Activated T-helper 2 cell treated with anti-CD3 and anti-CD28 coated beads, Interferon-gamma antibody, Interleukin-2, Interleukin-4, amounts not matched to agents 10 μg/mL and 5 μg/mL and 100 μg/mL, durations not matched to agents 14 hours and 24 hours and 36 hours (primary cell): ENCODE measurements at regions of chr1 and their contacts with region 1.

Region 1: DNA sequence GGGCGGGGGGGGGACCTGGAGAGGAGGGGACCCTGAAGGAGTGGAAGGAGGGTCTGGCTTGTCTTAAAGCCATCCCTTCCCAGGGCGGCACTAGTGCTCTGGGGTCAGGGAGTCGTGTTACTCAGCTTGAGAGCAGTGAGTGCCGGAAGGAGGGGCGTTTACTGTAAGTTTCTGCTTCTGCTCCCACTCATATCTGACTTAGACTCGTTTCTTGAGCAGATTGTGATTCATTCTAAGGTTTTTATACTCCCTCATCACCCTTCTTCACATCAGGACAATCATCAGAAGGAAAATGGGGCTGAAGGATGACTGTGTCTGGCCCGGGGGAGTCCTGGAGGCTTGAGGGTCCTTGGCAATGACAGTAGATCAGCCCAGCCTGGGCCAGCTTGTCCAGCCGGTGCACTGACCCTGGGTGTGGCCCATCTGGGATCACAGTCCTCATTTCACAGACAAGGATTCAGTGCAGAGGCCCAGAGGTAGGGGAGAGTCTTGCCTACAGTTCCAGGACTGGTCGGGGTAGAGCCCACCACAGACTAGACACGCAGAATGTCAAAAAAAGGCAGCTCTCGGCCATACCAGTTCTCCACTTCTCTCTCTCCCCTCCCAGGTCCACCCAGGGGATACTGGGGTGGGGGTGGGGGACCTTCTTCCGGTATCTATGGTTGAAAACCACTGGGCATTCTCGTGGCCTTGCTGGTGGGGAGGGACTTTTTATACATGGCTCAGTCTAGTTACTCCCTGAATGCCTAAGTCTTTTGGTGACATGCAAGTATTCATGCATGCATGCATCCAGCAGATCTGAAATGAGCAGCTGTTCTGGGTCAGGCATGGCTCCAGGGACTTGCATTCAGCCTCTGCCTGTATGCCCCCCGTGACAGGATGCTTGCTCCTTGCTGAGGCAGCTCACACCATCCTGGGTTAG is 5.1 kb downstream of the TNFRSF8 start:
- DNase-seq: peak; percentile 44
- H3K4me3 Mint-ChIP-seq: peak overlapping the region; percentile 73
- H3K27ac Mint-ChIP-seq: peak overlapping the region; percentile 94
- H3K4me1 Mint-ChIP-seq: peaks cover 49% of the 10 kb centered on the region
- H3K27me3 Mint-ChIP-seq: no peaks in the 10 kb centered on the region

Region 2: DNA sequence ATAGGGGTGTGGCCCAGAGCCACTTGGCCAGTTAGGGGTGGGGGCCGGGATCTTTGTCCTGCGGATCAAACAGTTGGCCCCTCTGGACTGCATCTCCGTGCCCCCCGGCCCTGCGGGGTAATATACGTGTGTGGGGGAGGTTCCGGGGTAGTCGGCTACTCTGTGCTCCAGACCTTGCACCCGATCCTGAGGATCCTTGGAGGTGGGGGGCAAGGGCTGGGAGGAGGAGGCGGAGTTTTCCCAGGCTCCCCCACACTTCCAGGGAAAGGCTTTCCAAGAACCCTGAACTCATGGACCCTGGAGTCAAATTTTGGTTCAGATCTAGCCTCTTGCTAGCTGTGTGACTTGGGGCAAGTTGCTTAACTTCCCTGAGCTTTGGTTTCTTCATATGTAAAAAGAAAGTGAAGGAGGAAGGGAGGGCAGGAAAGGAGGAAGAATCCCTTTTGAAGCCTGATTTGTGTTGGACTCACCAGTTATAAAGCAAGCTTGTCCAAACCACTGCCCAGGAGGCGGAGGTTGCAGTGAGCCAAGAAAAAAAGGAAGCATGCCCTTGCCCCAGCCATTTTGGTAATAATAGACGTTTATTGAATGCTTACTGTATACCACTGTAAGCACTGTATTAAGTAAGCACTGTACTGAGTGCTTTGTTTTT is 48.2 kb before region 1 on chr1:
- intact Hi-C with region 1: loop called (anchors 1 kb)
- DNase-seq: no peak
- H3K4me3 Mint-ChIP-seq: peak overlapping the region; percentile 87
- H3K27ac Mint-ChIP-seq: peak overlapping the region; percentile 72
- H3K4me1 Mint-ChIP-seq: peaks cover 6% of the 10 kb centered on the region
- H3K27me3 Mint-ChIP-seq: no peaks in the 10 kb centered on the region

Region 3: DNA sequence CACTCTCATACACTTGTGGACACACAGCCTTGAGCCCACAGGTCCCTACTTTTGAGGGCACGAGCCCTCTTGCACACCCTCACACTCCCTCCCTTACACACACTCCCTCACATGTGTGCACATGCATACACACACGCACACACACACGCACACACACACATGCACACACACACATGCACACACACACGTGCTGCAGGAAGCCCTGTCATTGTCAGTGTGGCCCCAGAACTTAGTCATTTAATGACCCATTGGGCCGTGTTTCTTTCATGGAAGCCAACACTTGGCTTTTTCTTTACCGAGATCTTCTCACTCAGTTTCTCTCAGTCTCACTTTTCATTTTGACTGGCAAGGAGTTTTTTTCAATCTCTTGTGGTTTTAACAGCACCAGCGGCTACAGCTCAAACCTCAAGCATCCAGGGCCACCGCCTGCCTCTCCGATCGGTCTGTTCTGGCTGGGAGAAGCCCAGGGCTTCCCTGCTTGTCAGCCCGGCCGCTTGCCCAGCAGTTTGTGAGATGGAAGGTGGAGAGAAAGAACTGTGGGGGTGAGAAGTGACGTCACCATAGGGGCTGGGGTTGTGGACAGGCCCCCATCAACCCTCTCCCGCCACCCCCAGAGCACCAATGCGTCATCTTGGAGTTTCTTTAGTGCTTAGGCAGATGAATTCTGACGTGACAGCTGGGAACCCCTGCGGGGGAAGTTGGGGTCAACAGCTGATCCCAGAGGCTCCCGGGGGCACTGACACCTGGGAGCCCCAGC is 20.9 kb before region 1 on chr1:
- intact Hi-C with region 1: loop called (anchors 1 kb)
- DNase-seq: peak; percentile 72
- H3K4me3 Mint-ChIP-seq: no peak overlapping the region
- H3K27ac Mint-ChIP-seq: no peak overlapping the region
- H3K4me1 Mint-ChIP-seq: peaks cover 31% of the 10 kb centered on the region
- H3K27me3 Mint-ChIP-seq: no peaks in the 10 kb centered on the region

Region 4: GRCh38 chr1:12148160-12148957 is 80.2 kb after region 1 on chr1:
- intact Hi-C with region 1: no loop called
- DNase-seq: no peak
- H3K4me3 Mint-ChIP-seq: no peak overlapping the region
- H3K27ac Mint-ChIP-seq: peak overlapping the region; percentile 96
- H3K4me1 Mint-ChIP-seq: peaks cover 75% of the 10 kb centered on the region
- H3K27me3 Mint-ChIP-seq: no peaks in the 10 kb centered on the region

Region 5: DNA sequence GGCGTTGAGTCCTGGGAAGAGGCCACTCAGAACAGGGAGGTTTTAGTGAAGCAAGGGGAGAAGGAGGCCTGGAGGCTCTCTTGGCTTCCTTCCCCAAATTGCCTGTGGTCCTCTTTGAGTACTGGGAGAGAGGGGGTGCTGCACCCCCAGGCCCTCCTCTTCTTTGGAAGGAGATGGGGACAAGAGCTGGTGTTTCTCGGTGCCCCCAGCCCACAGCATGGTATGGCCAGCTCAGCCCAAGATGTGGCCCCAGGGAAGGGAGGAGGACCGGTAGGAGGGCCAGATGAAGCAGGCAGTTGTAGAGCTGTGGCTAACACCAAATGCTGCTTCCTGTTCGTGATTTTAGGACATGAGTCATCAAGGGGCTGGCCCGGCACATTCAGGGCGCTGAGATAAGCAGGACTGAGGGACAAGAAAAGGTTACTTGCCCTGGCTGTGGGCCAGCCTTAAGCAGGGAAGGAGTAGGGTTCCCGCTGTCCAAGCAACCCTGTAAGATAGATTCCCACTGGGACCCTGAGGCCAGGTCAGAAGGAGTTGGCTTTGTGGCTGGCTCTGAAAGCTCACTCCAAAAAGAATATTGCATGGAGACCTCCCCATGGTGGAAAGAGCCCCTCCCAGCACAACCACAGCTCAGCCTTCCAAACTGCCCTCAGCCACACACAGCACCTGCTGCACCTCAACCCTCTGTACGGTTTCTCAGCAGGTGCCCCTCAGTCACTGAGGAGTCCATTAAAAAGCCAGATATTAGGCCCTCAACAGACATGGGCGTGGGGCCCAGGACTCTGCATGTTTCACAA is 93.7 kb after region 1 on chr1:
- intact Hi-C with region 1: loop called (anchors 5 kb)
- DNase-seq: peak; percentile 79
- H3K4me3 Mint-ChIP-seq: peak overlapping the region; percentile 56
- H3K27ac Mint-ChIP-seq: peak overlapping the region; percentile 96
- H3K4me1 Mint-ChIP-seq: peaks cover 68% of the 10 kb centered on the region
- H3K27me3 Mint-ChIP-seq: no peaks in the 10 kb centered on the region